Ovary (tissue), 10 donors: ENCODE measurements at regions of chr1 and their contacts with region 1.

Region 1: DNA sequence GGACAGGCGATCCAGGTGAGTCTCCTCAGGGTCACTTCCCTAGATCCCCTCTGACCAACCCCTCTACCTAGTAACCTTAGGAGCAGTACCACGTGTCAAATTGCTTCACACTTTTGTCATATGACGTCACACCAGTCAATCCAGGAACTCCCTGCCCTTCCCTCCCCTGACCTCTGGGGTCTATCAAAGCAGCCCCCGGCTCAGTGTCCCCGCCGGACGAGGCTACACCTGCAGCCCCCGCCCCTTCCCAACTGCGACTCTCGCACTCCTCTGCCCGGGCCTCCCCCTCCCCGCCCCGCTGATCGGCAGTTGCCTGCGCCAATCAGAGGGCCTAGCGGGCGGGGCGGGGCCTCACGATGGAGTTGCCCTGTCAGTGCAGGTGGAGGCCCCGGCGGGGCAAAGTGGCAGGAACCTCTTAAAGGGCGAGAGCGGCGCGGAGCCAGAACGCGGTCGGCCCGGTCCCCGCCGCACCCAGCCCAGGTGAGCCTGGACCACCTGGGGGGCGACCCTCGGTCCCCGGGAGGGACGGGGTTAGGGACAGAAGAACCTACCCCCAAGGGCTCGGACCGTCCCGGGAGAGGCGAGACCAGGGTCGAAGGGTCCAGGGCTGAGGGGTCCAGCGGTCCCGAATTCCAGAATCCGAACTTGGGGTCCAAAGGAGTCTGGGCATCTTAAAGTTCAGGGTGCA is 27.5 kb upstream of the EPB41 start:
- DNase-seq: peak; percentile 83 to 88 (median 86)
- H3K4me3 ChIP-seq: peak overlapping the region; percentile 72
- H3K27ac ChIP-seq: peak overlapping the region; percentile 39 to 46
- H3K4me1 ChIP-seq: peaks cover 10% of the 10 kb centered on the region
- H3K27me3 ChIP-seq: no peaks in the 10 kb centered on the region
- CTCF ChIP-seq: no peak
- EP300 ChIP-seq: no peak
- POLR2A ChIP-seq: peak; percentile 44

Region 2: DNA sequence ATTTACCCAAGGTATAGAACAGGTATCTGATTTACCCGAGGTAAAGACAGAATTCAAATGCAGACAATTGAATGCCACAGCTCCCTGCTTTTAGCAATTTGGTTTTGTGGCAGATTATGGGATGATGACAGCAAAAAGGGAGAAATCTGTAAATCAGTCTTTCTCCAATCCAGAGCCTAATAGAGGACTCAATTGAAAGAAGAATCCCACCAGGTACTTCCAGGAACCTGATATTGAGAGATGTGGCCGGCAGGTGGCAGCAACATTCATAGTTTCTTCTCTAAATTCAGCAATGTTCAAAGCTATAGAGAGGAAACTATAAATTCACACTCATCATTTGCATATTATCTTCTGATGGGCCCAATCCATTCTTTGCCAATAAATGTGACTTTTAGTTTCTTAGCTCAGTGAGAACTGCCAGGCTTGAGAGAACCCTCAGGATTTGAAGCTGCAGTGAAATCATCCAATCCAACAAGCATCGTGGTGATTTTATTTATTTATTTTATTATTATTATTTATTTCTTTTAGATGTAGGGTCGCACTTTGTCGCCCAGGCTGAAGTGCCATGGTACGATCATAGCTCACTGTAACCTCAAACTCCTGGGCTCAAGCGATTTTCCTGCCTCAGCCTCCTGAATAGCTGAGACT is 527.2 kb before region 1 on chr1:
- intact Hi-C with region 1: loop called in 1 of 4 experiments (anchors 2 kb)
- DNase-seq: peak; percentile 58 to 84 (median 78)
- H3K4me3 ChIP-seq: no peak overlapping the region
- H3K27ac ChIP-seq: no peak overlapping the region
- H3K4me1 ChIP-seq: no peaks in the 10 kb centered on the region
- H3K27me3 ChIP-seq: no peaks in the 10 kb centered on the region
- CTCF ChIP-seq: peak; percentile 37 to 55 (median 40)
- EP300 ChIP-seq: no peak
- POLR2A ChIP-seq: no peak

Region 3: DNA sequence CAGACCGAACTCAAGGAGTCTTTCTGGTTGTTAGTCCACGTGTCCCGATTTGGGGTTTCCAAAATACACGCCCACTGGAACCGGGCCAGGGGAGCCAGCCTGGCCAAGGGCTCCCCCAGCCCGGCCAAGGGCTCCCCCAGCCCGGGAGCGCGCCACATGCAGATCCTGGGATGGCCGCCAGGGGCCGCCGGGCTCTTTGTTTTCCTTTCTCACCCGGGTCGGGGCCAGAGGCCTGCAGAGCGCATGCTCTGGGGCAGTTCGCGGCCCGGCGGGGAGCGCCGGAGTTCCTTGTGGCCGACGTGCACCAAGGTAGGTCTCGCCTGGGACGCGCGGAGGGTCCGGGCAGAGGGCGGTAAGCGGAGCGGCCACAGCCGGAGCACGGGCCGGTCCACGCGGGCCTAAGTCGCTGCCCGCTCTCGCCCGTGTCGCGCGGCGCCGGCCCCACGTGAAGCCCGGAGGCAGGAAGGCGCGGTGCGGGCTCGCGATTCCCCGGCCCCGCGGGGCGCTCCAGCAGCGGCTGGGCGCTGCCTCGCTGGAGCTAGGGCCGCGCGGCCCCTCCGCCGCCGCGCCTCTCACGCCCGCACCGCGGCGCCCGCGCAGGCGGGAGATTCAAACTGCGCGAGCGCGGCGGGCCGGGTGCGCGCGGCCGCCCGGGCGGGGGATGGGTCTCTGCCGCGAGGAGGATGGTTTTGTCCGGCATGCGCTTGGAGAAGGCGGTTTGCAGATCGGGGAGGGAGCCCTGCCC is 368.7 kb before region 1 on chr1:
- intact Hi-C with region 1: loop called in 1 of 4 experiments (anchors 5 kb)
- DNase-seq: peak; percentile 90 to 96 (median 93)
- H3K4me3 ChIP-seq: peak overlapping the region; percentile 58
- H3K27ac ChIP-seq: peak overlapping the region; percentile 54 to 83
- H3K4me1 ChIP-seq: peaks cover 5% of the 10 kb centered on the region
- H3K27me3 ChIP-seq: no peaks in the 10 kb centered on the region
- CTCF ChIP-seq: peak; percentile 93 to 96 (median 96)
- EP300 ChIP-seq: no peak
- POLR2A ChIP-seq: peak; percentile 34

Region 4: DNA sequence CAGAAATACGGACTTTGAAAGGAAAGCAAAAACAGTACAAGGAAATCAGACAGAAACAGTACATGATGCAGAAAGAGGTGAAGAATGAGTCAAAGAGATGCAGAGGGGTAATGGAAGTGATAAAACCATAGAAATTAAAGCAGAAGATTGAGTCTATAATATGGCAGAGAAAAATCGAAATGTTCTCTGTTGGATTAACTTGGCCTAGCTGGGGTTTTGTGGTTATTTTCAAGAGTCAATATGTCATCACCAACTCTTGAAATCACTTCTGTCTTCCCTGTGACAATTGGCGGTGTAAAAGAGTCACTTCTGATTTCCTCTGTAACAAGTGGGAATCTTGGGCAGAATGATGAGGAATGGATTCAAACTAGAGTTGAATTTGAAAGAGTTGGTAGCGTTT is 142.7 kb before region 1 on chr1:
- intact Hi-C with region 1: no loop called
- DNase-seq: no peak
- H3K4me3 ChIP-seq: no peak overlapping the region
- H3K27ac ChIP-seq: no peak overlapping the region
- H3K4me1 ChIP-seq: peaks cover 14% of the 10 kb centered on the region
- H3K27me3 ChIP-seq: no peaks in the 10 kb centered on the region
- CTCF ChIP-seq: no peak
- EP300 ChIP-seq: no peak
- POLR2A ChIP-seq: no peak

Region 5: DNA sequence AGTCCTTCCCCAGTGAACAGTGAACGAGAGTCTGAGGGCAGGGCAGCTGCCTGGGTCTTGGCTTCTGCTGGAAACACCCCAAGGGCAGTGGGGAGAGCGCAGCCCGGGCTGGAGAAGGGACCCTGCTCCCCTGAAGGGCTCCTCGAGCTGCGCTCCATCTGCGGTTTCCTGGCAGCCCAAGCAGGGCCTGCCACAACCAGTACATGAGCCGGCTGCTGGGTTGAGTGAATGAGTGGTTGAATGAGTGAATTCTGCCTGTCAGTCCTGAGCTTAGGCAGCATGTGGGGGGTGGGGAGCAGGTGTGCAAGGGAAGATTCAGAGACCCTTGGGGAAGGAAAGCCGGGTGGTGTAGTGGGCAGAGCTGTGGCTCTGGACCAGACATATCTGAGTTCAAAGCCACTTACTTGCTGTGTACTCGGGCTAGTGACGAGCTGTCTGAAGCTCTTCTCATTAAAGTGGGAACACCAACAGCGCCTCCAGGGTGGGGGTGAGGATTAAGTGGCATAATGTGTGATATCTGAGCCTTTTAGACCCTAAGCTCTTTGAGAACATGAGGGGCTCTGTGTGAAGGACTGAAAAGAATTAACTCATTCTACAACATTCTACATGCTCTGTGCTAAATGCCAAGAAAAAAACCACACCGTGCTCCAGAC is 71.2 kb before region 1 on chr1:
- intact Hi-C with region 1: no loop called
- DNase-seq: no peak
- H3K4me3 ChIP-seq: no peak overlapping the region
- H3K27ac ChIP-seq: no peak overlapping the region
- H3K4me1 ChIP-seq: peaks cover 2% of the 10 kb centered on the region
- H3K27me3 ChIP-seq: no peaks in the 10 kb centered on the region
- CTCF ChIP-seq: no peak
- EP300 ChIP-seq: no peak
- POLR2A ChIP-seq: no peak

Region 6: GRCh38 chr1:28971980-28972771 is 85.3 kb after region 1 on chr1:
- intact Hi-C with region 1: no loop called
- DNase-seq: peak in 2 of 5 donors; percentile 29 to 41
- H3K4me3 ChIP-seq: no peak overlapping the region
- H3K27ac ChIP-seq: no peak overlapping the region
- H3K4me1 ChIP-seq: peaks cover 2% of the 10 kb centered on the region
- H3K27me3 ChIP-seq: no peaks in the 10 kb centered on the region
- CTCF ChIP-seq: no peak
- EP300 ChIP-seq: no peak
- POLR2A ChIP-seq: no peak

Region 7: DNA sequence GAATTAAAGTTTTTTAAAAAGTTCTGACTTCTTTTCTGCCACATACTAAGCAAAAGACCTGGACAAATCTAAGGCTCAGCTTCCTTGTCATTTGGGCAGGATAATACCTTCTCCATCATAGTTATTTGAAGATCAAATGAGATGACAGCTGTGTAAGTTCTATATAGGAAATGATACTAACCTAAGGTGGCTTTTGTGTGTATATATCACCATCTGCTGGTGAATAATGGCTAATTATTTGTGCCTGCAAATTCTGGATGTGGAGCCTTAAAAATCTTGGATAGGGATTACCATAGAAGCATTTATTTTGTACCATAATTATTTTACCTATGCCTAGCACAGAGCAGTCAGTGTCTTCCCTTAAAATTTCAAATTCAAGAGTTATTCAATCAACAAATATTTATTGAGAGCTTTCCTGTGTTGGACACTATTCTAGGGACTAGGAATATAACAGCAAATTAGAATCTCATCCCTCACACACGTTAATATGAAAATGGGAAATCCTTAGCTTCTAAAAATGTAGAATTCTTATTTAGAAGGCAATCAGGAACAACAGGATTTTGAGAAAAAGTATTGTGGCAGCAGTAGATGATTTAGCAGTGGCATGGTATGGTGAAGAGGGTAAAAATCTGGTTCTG is 147.1 kb after region 1 on chr1:
- intact Hi-C with region 1: loop called (anchors 2 to 5 kb)
- DNase-seq: no peak
- H3K4me3 ChIP-seq: no peak overlapping the region
- H3K27ac ChIP-seq: no peak overlapping the region
- H3K4me1 ChIP-seq: no peaks in the 10 kb centered on the region
- H3K27me3 ChIP-seq: no peaks in the 10 kb centered on the region
- CTCF ChIP-seq: peak in 2 of 3 donors; percentile 78 to 80
- EP300 ChIP-seq: no peak
- POLR2A ChIP-seq: no peak

Region 8: GRCh38 chr1:29124366-29125236 is 237.7 kb after region 1 on chr1:
- intact Hi-C with region 1: loop called (anchors 5 to 10 kb)
- DNase-seq: peak; percentile 93 to 96 (median 95)
- H3K4me3 ChIP-seq: peak overlapping the region; percentile 66
- H3K27ac ChIP-seq: peak overlapping the region; percentile 91 to 95
- H3K4me1 ChIP-seq: peaks cover 14% of the 10 kb centered on the region
- H3K27me3 ChIP-seq: no peaks in the 10 kb centered on the region
- CTCF ChIP-seq: peak; percentile 90 to 100 (median 100)
- EP300 ChIP-seq: peak; percentile 29
- POLR2A ChIP-seq: peak; percentile 89

Region 9: GRCh38 chr1:29202584-29203340 is 315.9 kb after region 1 on chr1:
- intact Hi-C with region 1: loop called (anchors 2 to 5 kb)
- DNase-seq: peak; percentile 96 to 98 (median 97)
- H3K4me3 ChIP-seq: no peak overlapping the region
- H3K27ac ChIP-seq: peak overlapping the region in 1 of 2 donors; percentile 80
- H3K4me1 ChIP-seq: no peaks in the 10 kb centered on the region
- H3K27me3 ChIP-seq: no peaks in the 10 kb centered on the region
- CTCF ChIP-seq: peak; percentile 92 to 97 (median 95)
- EP300 ChIP-seq: no peak
- POLR2A ChIP-seq: no peak

Region 10: GRCh38 chr1:29227511-29227910 is 340.6 kb after region 1 on chr1:
- intact Hi-C with region 1: no loop called
- DNase-seq: no peak
- H3K4me3 ChIP-seq: no peak overlapping the region
- H3K27ac ChIP-seq: no peak overlapping the region
- H3K4me1 ChIP-seq: peaks cover 2% of the 10 kb centered on the region
- H3K27me3 ChIP-seq: no peaks in the 10 kb centered on the region
- CTCF ChIP-seq: no peak
- EP300 ChIP-seq: no peak
- POLR2A ChIP-seq: no peak